Aorta (tissue), 5 donors: ENCODE measurements at regions of chr21 and their contacts with region 1.

Region 1: DNA sequence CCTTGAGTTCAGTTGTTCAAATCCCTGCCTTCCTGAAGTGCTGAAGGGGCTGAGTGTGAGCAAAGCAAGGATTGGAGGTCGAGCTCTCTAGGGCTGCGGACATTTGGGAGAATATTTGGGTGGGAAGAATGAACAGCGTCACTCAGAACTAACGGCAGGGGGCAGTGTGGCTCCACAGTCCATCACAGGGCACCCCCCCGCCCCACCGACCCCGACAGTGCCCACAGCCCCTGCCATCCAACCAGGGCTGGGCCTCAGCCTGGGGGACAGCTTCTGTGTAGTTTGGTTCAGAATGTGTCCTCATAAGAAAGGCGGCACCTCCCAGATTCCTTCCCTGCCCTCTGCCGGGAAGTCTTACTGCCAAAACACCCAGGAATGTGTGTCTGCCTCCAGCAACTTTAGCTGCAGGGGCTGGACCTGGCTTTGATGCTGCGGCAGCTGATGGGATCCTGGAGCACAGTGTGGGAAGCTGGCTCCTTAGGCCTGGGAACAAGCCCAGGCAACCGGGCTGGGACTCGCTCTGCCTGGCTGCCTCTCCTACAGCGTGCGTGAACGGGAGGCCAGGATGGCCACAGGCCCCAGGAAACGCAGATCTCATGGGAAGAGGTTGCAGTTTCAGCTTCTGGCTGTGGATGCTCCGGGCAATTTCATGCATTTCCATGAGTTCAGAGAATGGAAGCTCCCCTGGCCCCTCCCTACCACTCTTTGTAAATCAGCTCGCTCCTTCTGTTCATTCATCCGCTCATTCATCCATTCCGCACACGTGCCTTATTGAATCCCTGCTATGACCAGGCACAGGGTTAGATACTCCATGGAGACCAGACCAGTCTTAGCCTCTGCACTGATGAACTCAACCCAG is 104.9 kb upstream of the TMPRSS2 start:
- DNase-seq: peak; percentile 94 to 95
- ATAC-seq: peak; percentile 93
- H3K4me3 ChIP-seq: no peak overlapping the region
- H3K27ac ChIP-seq: peak overlapping the region; percentile 71 to 91
- H3K4me1 ChIP-seq: peaks cover 2 to 7% of the 10 kb centered on the region in 2 donors
- H3K27me3 ChIP-seq: no peaks in the 10 kb centered on the region

Region 2: GRCh38 chr21:41641821-41642701 is 29.2 kb after region 1 on chr21:
- intact Hi-C with region 1: loop called in 1 of 2 experiments (anchors 1 kb)
- DNase-seq: peak; percentile 81 to 89
- ATAC-seq: peak; percentile 85
- H3K4me3 ChIP-seq: no peak overlapping the region
- H3K27ac ChIP-seq: peak overlapping the region; percentile 61 to 93
- H3K4me1 ChIP-seq: peaks cover 7 to 8% of the 10 kb centered on the region in 2 donors
- H3K27me3 ChIP-seq: no peaks in the 10 kb centered on the region

Region 3: DNA sequence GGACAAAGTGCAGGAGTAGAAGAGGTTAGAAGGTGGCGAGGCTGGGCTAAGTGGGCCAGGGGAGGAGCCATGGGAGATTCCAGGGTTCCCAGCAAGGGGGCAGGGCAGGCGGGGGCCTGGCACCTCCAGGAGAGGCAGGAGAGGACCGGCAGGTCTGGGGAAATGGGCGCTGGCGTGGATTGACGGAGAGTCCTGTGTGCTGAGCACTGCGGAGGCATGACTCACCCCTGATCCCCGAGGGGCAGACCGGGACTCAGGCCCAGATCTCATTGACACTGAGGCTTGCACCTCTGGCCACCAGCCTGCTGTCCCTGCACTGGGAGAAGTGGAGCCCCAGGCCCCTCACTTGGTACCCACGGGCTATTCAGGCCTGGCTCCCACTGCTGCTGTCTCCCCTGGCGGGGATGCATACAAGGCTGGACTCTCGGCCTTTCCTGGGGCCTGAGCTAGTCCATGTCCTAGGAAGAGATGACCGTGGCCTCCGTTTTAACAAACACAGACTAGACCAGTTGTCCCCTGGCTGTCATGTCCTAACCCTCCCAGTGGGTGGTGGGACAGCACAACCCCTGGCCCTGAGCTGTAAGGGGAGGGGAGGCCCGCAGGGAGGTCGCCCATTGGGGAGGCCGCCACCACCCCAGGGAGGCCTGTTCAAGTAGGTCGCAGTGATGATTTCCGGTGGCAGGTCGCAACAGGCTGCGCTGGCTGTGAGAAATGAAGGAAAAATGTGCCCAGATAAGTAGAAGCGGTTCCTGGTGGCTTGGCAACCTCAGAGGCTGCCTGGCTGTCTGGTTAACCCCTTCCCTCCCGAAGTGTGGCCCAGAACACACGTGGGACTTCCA is 114.3 kb after region 1 on chr21:
- intact Hi-C with region 1: loop called (anchors 1 to 5 kb)
- DNase-seq: peak; percentile 92 to 96
- ATAC-seq: peak; percentile 90
- H3K4me3 ChIP-seq: no peak overlapping the region
- H3K27ac ChIP-seq: peak overlapping the region; percentile 64 to 89
- H3K4me1 ChIP-seq: no peaks in the 10 kb centered on the region
- H3K27me3 ChIP-seq: no peaks in the 10 kb centered on the region

Region 4: DNA sequence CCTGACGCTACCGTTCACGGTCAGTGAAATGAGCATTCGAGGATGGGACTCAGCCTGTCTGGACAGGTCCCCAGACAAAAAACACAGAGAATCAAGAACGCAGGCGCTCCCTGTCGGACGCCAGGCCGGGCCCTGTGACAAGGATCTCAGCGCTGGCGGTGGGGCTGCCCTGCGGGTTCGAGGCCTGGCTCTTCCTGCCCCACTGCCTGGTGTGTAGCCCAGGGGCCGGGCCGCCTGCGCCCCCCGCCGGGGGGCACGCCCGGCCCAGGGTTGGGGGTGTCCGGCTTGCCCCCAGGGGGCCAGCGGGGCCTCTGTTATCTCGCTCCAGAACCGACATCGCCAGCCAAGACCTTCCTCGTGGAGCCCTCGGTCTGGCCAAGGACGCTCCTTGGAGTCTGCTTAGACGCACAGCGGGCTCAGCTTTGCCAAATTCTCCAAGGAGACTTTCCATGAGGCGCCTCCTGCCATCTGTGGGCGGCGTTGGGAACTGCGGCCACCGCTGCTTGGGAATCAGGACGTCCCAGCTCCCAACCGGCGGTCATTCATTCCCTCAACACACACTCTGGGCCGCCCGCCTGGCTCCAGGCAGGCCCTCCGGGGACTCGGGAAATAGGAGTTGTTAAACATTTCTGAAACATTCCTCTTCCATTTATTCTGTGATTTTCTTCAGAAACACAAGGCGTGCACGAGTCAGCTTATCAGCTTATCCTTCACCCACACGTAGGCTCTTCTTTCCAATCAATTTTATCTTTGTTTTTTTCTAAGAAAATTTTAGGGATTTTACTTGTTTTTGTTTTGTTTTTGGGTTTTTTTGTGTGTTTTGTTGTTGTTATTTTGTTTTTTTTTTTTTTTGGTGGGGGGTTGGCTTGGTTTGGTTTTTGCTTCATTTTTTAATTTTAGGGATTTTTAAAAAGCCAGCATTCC is 165.3 kb after region 1 on chr21:
- intact Hi-C with region 1: loop called (anchors 1 to 2 kb)
- DNase-seq: peak; percentile 92 to 97
- ATAC-seq: peak; percentile 92
- H3K4me3 ChIP-seq: no peak overlapping the region
- H3K27ac ChIP-seq: peak overlapping the region in 1 of 2 donors; percentile 72
- H3K4me1 ChIP-seq: no peaks in the 10 kb centered on the region
- H3K27me3 ChIP-seq: no peaks in the 10 kb centered on the region

Region 5: DNA sequence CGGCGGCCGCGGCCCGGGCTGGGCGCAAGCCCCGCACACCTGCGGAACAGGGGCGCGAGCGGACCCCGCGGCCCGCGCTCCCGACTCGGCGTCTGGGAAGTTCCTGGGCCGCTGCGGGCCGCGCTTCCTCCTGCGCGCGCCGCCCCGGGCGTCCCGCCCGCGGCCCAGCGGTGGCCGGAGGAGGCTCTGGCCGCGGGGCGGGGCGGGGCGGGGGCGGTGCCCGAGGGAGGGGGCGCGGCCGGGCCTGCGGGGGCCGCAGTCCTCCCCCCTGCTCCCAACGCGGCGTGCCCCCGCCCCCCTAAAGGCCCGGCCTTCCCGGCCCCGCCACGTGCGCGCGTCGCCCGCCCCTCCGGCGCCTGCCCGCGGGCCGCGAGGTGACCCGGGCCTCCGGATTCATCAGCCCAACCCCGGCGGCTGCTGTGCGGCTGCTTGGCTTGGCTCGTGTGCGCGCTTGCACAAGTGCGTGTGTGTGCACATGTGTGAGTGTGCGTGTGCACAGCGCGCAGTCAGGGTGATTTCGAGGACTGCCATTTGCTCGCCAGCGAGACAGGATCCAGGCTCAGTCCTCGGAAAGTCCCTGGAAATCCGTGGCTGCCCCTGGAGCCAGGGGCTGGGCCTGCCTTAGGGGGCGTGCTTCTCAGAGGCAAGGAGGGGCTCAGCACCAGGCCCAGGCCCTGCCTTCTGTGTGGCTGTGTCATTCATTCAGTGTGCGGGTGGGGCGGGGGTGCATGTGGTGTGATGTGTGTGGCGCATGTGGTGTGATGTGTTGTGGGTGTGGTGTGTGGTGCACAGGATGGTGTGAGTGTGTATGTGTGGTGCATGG is 341.1 kb after region 1 on chr21 and contains the start of gene C2CD2:
- intact Hi-C with region 1: loop called in 1 of 2 experiments (anchors 5 kb)
- DNase-seq: peak; percentile 83 to 92
- ATAC-seq: peak; percentile 89
- H3K4me3 ChIP-seq: peak within 1 kb of the TSS; percentile 76 to 78
- H3K27ac ChIP-seq: peak within 1 kb of the TSS in 1 of 2 donors; percentile 78
- H3K4me1 ChIP-seq: no peaks in the 10 kb centered on the region
- H3K27me3 ChIP-seq: no peaks in the 10 kb centered on the region
- total RNA-seq, gene C2CD2: 56.8 to 59.8 TPM

Region 6: GRCh38 chr21:42117229-42117966 is 504.5 kb after region 1 on chr21:
- intact Hi-C with region 1: loop called (anchors 5 kb)
- DNase-seq: peak; percentile 80 to 92
- ATAC-seq: peak; percentile 87
- H3K4me3 ChIP-seq: no peak overlapping the region
- H3K27ac ChIP-seq: no peak overlapping the region
- H3K4me1 ChIP-seq: no peaks in the 10 kb centered on the region
- H3K27me3 ChIP-seq: no peaks in the 10 kb centered on the region